Right cardiac atrium (tissue), 5 donors: ENCODE measurements at regions of chr9 and their contacts with region 1.

Region 1: GRCh38 chr9:121321016-121321503 is 49.0 kb downstream of the STOM start:
- DNase-seq: peak in 2 of 3 donors; percentile 51 to 59
- ATAC-seq: peak in 1 of 2 donors; percentile 2
- H3K4me3 ChIP-seq: no peak overlapping the region
- H3K27ac ChIP-seq: peak overlapping the region; percentile 47
- H3K4me1 ChIP-seq: peaks cover 12% of the 10 kb centered on the region
- H3K27me3 ChIP-seq: no peaks in the 10 kb centered on the region

Region 2: DNA sequence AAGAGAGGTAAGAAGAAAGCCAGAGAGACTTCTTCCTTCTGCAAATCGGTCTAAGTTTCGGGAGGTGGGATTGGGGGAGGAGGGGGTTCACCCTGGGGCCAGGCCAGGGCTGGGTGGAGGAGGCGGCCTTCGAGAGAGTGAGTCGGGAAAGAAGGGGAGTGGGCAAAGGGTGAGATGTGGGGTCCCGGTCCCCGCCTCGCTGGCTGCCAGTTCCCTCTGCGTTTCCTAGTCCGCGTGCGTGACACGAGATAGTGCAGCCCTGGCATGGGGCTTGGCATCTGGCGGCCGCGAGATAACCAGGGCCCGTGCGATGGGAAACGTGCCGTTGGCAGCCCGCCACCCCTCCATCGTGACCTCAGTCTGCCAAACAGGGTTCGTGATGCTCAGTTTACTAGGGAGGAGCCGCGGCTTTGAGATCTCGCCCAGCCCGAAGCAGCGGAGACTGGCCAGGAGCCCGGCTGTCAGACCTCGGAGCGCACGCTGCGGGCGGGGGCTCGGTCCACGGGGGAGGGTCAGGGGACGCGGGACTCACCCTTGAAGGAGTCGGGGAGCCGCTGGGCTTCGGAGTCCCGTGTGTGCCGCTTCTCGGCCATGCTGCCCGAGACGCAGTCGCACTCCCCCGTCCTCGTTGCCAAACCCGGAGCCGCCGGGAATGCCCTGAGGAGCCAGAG is 48.7 kb after region 1 on chr9 and contains the start of gene STOM:
- intact Hi-C with region 1: loop called in 3 of 4 experiments (anchors 2 to 5 kb)
- DNase-seq: peak; percentile 93 to 97 (median 96)
- ATAC-seq: peak; percentile 84 to 85
- H3K4me3 ChIP-seq: peak within 1 kb of the TSS; percentile 65
- H3K27ac ChIP-seq: peak within 1 kb of the TSS; percentile 86
- H3K4me1 ChIP-seq: peaks cover 3% of the 10 kb centered on the region
- H3K27me3 ChIP-seq: no peaks in the 10 kb centered on the region
- total RNA-seq, gene STOM: 146 to 246 (median 172) TPM

Region 3: GRCh38 chr9:121399883-121400607 is 79.0 kb after region 1 on chr9:
- intact Hi-C with region 1: loop called in 2 of 4 experiments (anchors 5 to 10 kb)
- DNase-seq: no peak
- ATAC-seq: peak; percentile 33 to 54
- H3K4me3 ChIP-seq: no peak overlapping the region
- H3K27ac ChIP-seq: no peak overlapping the region
- H3K4me1 ChIP-seq: no peaks in the 10 kb centered on the region
- H3K27me3 ChIP-seq: no peaks in the 10 kb centered on the region